Esophagus muscularis mucosa (tissue), 4 donors: ENCODE measurements at regions of chr4 and their contacts with region 1.

Region 1: GRCh38 chr4:140996766-140997165 is 136.5 kb downstream of the RNF150 start:
- DNase-seq: no peak
- H3K4me3 ChIP-seq: no peak overlapping the region
- H3K27ac ChIP-seq: peak overlapping the region; percentile 57 to 77 (median 71)
- H3K4me1 ChIP-seq: peaks cover 28 to 65% (median 53%) of the 10 kb centered on the region in 4 donors
- H3K27me3 ChIP-seq: no peaks in the 10 kb centered on the region
- CTCF ChIP-seq: peak in 1 of 3 experiments; percentile 40
- EP300 ChIP-seq: peak; percentile 51
- POLR2A ChIP-seq: no peak

Region 2: GRCh38 chr4:140943486-140944198 is 53.1 kb before region 1 on chr4:
- intact Hi-C with region 1: loop called (anchors 5 kb)
- DNase-seq: no peak
- H3K4me3 ChIP-seq: no peak overlapping the region
- H3K27ac ChIP-seq: peak overlapping the region; percentile 58 to 75 (median 66)
- H3K4me1 ChIP-seq: peaks cover 20 to 72% (median 55%) of the 10 kb centered on the region in 4 donors
- H3K27me3 ChIP-seq: no peaks in the 10 kb centered on the region
- CTCF ChIP-seq: no peak
- EP300 ChIP-seq: no peak
- POLR2A ChIP-seq: no peak

Region 3: GRCh38 chr4:141081921-141082395 is 85.2 kb after region 1 on chr4:
- intact Hi-C with region 1: loop called (anchors 5 kb)
- DNase-seq: no peak
- H3K4me3 ChIP-seq: peak overlapping the region; percentile 22 to 46 (median 38)
- H3K27ac ChIP-seq: peak overlapping the region; percentile 45 to 67 (median 58)
- H3K4me1 ChIP-seq: peaks cover 10 to 52% (median 49%) of the 10 kb centered on the region in 4 donors
- H3K27me3 ChIP-seq: no peaks in the 10 kb centered on the region
- CTCF ChIP-seq: no peak
- EP300 ChIP-seq: no peak
- POLR2A ChIP-seq: no peak

Region 4: DNA sequence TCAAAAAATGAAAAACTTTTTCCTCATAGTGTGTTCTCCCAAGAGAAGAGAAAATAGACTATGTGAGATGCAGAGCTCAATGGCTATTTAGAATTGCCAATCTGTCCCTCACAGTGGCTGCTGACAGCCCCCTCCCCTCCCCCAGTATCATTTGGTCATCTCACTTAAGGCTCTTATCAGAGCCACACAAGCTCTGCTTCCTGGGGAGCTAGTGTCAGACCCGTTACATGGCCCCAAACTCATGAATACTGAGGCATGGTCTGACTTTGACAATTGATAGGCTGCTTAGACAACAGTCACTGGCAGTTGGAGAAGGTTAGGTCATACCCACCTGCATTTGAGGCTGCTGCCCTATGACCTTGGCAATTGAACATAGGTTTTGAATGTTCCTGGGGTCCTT is 121.2 kb after region 1 on chr4:
- intact Hi-C with region 1: no loop called
- DNase-seq: no peak
- H3K4me3 ChIP-seq: no peak overlapping the region
- H3K27ac ChIP-seq: no peak overlapping the region
- H3K4me1 ChIP-seq: peaks cover 8 to 31% (median 24%) of the 10 kb centered on the region in 4 donors
- H3K27me3 ChIP-seq: no peaks in the 10 kb centered on the region
- CTCF ChIP-seq: no peak
- EP300 ChIP-seq: no peak
- POLR2A ChIP-seq: no peak